Activated T-helper 2 cell treated with anti-CD3 and anti-CD28 coated beads, Interferon-gamma antibody, Interleukin-2, Interleukin-4, amounts not matched to agents 10 μg/mL and 5 μg/mL and 100 μg/mL, durations not matched to agents 14 hours and 24 hours and 36 hours (primary cell): ENCODE measurements at regions of chr14 and their contacts with region 1.

Region 1: GRCh38 chr14:24160850-24161804 is at the start of gene IRF9:
- DNase-seq: peak; percentile 97
- H3K4me3 Mint-ChIP-seq: peak within 1 kb of the TSS; percentile 95
- H3K27ac Mint-ChIP-seq: peak within 1 kb of the TSS; percentile 97
- H3K4me1 Mint-ChIP-seq: peaks cover 38% of the 10 kb centered on the region
- H3K27me3 Mint-ChIP-seq: no peaks in the 10 kb centered on the region
- total RNA-seq, gene IRF9: 124 and 129 TPM in 2 replicates

Region 2: GRCh38 chr14:24058260-24058950 is 102.7 kb before region 1 on chr14:
- intact Hi-C with region 1: loop called (anchors 5 kb)
- DNase-seq: peak; percentile 38
- H3K4me3 Mint-ChIP-seq: no peak overlapping the region
- H3K27ac Mint-ChIP-seq: no peak overlapping the region
- H3K4me1 Mint-ChIP-seq: peaks cover 3% of the 10 kb centered on the region
- H3K27me3 Mint-ChIP-seq: peaks cover 3% of the 10 kb centered on the region

Region 3: GRCh38 chr14:24135834-24136542 is 25.1 kb before region 1 on chr14 and contains the start of gene PSME1:
- intact Hi-C with region 1: loop called (anchors 1 kb)
- DNase-seq: peak; percentile 93
- H3K4me3 Mint-ChIP-seq: peak within 1 kb of the TSS; percentile 92
- H3K27ac Mint-ChIP-seq: peak within 1 kb of the TSS; percentile 91
- H3K4me1 Mint-ChIP-seq: peaks cover 47% of the 10 kb centered on the region
- H3K27me3 Mint-ChIP-seq: no peaks in the 10 kb centered on the region
- total RNA-seq, gene PSME1: 340 and 342 TPM in 2 replicates

Region 4: DNA sequence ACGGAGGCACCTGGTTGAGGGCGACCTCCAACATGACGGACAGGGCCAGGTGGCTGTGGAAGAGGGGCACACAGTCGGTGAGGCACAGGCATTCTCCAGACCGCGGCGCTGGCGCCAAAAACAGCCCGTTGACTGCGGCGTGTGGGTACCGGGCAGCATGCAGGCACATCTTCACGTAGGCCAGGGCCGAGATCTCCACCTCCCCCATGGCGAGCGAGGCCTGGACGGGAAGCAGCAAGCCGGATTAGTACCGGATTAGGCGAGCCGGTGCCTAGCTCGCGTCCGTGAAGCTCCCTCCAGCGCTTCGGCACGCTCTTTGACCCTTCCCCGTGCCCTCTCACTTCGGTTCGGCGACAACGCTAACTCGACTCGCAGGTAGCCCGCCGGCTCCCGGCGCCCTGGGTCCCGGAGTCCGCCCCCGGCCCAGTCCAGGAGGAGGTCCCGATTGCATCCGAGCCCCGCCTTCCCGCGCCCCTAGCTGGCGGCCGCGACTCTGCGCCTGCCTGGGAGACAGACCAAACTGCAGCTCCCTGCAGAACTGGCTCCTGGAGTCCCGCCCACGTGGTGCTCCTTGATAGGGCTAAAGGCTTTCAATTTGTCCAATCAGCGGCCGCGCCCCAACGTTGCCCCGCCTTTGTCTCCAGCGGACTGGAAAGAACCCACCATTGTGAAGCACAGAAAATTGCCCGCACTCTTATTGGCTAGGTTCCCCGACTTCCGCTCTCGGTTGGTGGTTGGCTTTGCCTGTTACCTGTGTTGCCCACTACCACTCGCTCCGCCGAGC is 19.8 kb before region 1 on chr14 and contains the start of gene EMC9:
- intact Hi-C with region 1: loop called (anchors 1 kb)
- DNase-seq: peak; percentile 100
- H3K4me3 Mint-ChIP-seq: peak within 1 kb of the TSS; percentile 91
- H3K27ac Mint-ChIP-seq: peak within 1 kb of the TSS; percentile 79
- H3K4me1 Mint-ChIP-seq: peaks cover 58% of the 10 kb centered on the region
- H3K27me3 Mint-ChIP-seq: no peaks in the 10 kb centered on the region
- total RNA-seq, gene EMC9: 26.4 and 30.4 TPM in 2 replicates

Region 5: GRCh38 chr14:24146978-24147760 is 14.0 kb before region 1 on chr14 and contains the start of gene RNF31:
- intact Hi-C with region 1: loop called (anchors 1 kb)
- DNase-seq: peak; percentile 97
- H3K4me3 Mint-ChIP-seq: peak within 1 kb of the TSS; percentile 100
- H3K27ac Mint-ChIP-seq: peak within 1 kb of the TSS; percentile 100
- H3K4me1 Mint-ChIP-seq: peaks cover 43% of the 10 kb centered on the region
- H3K27me3 Mint-ChIP-seq: no peaks in the 10 kb centered on the region
- total RNA-seq, gene RNF31: 80.4 and 92.0 TPM in 2 replicates

Region 6: DNA sequence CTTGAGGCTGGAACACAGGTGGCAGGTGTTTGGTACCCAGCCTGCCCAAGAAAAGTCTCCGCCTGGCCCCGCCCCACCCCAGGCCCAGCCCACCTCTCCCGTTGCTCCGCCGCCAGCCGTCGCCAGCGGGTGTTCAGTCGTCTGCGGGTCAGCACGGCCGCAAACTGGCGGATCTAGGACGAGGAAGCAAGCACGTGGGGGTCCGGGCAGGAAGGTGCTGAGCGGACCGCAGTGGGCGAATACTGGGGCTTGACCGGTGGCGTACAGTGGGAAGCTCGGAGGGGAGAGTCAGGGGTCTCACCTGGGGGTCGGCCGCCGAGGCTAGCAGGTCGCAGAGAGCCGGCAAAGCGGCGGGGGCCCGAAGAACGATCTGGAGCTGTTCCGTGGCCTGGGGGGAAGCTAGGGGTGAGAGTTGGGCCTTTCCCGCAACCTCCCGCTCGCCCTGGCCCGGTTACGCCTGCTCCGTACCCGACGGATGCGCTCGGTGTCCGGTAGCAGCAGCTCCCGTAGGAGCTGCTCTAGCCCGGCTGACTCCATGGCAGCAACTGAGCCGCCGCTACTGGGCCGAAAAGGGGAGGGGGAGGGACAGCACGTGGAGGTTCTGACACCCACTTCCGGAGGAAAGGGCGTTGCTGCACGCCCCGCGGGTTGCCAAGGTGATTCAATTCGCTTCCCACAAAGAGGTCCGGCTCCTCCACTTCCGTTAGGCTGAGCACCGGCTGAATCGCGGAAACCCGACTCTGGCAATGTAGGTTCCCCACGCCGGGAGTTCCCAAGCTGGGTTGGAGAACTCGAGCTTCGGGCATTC is 27.3 kb after region 1 on chr14 and contains the start of gene IPO4:
- intact Hi-C with region 1: loop called (anchors 1 kb)
- DNase-seq: peak; percentile 93
- H3K4me3 Mint-ChIP-seq: peak within 1 kb of the TSS; percentile 88
- H3K27ac Mint-ChIP-seq: peak within 1 kb of the TSS; percentile 81
- H3K4me1 Mint-ChIP-seq: peaks cover 23% of the 10 kb centered on the region
- H3K27me3 Mint-ChIP-seq: no peaks in the 10 kb centered on the region
- total RNA-seq, gene IPO4: 77.0 and 80.4 TPM in 2 replicates